Left cardiac atrium (tissue), 4 donors: ENCODE measurements at regions of chr9 and their contacts with region 1.

Region 1: GRCh38 chr9:22244141-22245011 is 202.2 kb upstream of the DMRTA1 start:
- DNase-seq: peak; percentile 21
- ATAC-seq: peak in 1 of 2 donors; percentile 68

Region 2: DNA sequence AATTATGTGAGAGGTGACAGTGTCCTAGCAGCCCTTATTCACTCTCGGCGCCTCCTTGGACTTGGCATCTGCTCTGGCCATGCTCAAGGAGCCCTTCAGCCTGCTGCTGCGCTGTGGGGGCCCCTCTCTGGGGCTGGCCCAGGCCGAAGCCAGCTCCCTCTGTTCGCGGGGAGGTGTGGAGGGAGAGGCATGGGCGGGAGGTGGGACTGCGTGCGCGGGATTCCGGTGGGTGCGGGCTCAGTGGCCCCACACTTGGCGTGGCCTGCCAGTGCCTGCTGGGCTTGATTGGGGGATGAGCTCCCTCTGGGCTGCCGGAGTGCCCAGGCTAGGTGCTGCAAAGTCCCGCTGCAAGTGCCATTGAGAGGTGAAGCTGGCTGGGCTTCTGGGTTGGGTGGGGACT is 189.3 kb after region 1 on chr9:
- intact Hi-C with region 1: no loop called
- DNase-seq: no peak
- ATAC-seq: no peak

Region 3: DNA sequence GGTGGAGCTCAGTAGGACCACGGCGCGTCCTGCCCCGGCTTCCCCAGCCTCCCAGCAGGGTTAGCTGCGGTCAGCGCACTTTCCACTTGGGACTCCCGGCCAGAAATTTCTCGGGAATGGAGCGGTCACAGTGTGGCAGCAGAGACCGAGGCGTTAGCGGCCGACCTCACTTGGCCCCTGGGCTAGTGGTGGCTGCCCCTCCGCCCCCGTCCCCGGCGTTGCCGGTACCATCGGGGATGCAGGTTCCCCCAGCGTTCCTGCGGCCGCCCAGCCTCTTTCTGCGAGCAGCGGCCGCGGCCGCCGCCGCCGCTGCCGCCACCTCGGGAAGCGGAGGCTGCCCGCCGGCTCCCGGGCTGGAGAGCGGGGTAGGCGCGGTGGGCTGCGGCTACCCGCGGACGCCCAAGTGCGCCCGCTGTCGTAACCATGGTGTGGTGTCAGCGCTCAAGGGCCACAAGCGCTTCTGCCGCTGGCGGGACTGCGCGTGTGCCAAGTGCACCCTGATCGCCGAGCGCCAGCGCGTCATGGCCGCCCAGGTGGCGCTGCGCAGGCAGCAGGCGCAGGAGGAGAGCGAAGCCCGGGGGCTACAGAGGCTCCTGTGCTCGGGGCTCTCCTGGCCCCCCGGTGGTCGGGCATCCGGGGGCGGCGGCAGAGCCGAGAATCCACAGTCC is 202.7 kb after region 1 on chr9:
- intact Hi-C with region 1: loop called in 1 of 2 experiments (anchors 5 kb)
- DNase-seq: peak; percentile 55
- ATAC-seq: peak; percentile 84 to 92